ENCODE measurements at regions of chr1 and their contacts with region 1.

Region 1: DNA sequence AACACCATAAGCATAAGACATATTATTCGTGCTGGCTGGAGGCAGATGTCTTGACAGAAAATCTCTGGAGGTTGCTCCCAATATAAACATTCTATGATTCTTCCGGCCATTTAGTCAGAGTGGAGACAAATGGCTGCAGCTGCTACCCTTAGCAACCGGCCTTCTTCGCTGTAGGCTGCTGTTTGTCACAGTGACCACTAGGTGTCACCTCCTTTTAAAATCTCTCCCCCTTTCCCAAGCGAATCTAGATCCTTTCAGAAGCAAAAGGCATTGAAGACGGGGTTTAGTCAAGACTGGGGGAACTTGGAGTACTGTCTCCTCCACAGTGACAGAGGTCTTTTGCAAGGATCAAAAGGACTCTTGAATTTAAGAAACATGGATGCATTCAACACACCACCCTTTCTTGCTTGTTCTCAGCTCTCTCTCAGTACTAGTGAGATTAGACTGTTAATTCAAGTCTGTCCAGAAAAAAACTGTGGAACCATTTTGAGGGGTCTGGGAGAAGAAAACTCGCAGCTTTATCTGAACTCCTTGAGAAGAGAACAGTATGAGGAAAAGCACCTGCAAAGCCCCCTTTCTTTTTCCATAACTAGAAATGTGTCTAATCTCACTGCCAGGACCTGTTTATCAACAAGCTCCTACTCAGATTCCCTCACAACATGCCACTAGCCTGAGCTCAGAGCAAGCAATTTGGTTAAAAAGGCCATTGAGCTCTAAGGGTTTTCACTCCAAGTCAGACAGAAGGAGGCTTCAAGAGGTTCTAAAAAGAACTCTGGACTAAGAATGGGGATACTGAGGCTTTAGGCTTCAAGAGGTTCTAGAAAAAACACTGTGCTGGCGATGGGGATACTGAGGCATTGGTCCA is 408.3 kb upstream of the PLXNA2 start:
- DNase-seq: peak; percentile 13
- H3K4me3 Mint-ChIP-seq: no peak overlapping the region
- H3K27ac Mint-ChIP-seq: no peak overlapping the region
- H3K4me1 Mint-ChIP-seq: no peaks in the 10 kb centered on the region
- H3K27me3 Mint-ChIP-seq: no peaks in the 10 kb centered on the region

Region 2: DNA sequence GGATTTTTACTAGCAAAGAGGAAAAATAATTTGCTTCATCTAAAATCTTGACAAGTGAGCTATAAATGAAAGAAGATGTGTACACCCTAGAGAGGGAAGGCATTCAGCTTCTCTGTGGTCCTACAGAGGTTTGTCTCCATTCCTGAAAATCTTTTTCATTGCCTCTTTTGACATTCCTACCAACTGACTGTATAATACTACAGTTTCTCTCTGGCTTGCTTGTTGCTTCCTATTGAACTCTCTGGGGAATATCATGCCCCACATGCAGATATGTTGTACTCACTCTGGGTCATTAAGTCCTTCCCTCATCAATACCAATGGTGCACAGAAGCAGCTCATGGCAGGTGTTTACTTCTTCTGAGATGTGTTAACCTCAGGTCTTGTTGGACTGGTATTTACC is 37.2 kb before region 1 on chr1:
- intact Hi-C with region 1: no loop called
- DNase-seq: no peak
- H3K4me3 Mint-ChIP-seq: no peak overlapping the region
- H3K27ac Mint-ChIP-seq: no peak overlapping the region
- H3K4me1 Mint-ChIP-seq: no peaks in the 10 kb centered on the region
- H3K27me3 Mint-ChIP-seq: no peaks in the 10 kb centered on the region

Region 3: DNA sequence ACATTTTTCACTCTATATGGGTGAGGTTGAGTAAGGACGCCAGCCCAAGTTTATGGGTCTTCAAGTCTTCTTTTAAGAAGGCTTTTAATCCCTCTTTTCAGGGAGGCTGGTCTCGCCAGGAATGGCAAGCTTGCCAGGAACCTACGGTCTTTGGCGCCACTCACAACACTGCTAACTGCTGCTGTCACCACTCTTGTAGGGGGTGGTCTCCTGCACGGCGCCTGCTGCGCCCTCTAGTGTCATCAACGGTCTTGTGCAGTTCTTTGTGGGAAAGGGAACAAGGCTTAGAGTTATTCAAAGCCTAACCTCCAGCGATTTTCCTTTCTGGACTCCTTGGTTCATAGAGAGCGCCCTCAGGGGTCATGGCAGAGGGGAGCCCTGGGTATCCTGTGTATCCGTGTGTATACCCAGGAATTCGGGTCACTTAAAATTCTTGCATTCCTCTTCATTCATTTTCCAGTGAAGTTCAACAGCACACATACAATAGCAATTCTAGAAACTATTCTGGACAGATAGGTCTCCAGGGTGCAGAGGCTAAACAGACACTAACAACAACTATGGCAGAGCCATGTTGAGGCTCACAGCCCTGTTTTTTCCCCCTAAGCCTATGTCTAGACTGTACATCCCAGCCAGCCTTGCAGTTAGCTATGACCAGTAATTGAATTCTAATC is 538.2 kb after region 1 on chr1:
- intact Hi-C with region 1: loop called (anchors 10 kb)
- DNase-seq: no peak
- H3K4me3 Mint-ChIP-seq: no peak overlapping the region
- H3K27ac Mint-ChIP-seq: no peak overlapping the region
- H3K4me1 Mint-ChIP-seq: no peaks in the 10 kb centered on the region
- H3K27me3 Mint-ChIP-seq: no peaks in the 10 kb centered on the region

Region 4: GRCh38 chr1:209248649-209249279 is 596.2 kb after region 1 on chr1:
- intact Hi-C with region 1: loop called (anchors 2 kb)
- DNase-seq: peak; percentile 14
- H3K4me3 Mint-ChIP-seq: no peak overlapping the region
- H3K27ac Mint-ChIP-seq: no peak overlapping the region
- H3K4me1 Mint-ChIP-seq: no peaks in the 10 kb centered on the region
- H3K27me3 Mint-ChIP-seq: no peaks in the 10 kb centered on the region

Region 5: GRCh38 chr1:209565759-209566678 is 913.5 kb after region 1 on chr1:
- intact Hi-C with region 1: loop called (anchors 5 kb)
- DNase-seq: peak; percentile 57
- H3K4me3 Mint-ChIP-seq: no peak overlapping the region
- H3K27ac Mint-ChIP-seq: no peak overlapping the region
- H3K4me1 Mint-ChIP-seq: peaks cover 19% of the 10 kb centered on the region
- H3K27me3 Mint-ChIP-seq: peaks cover 17% of the 10 kb centered on the region

Measured in activated T-helper 2 cell treated with anti-CD3 and anti-CD28 coated beads, Interferon-gamma antibody, Interleukin-2, Interleukin-4, amounts not matched to agents 10 μg/mL and 5 μg/mL and 100 μg/mL, durations not matched to agents 14 hours and 24 hours and 36 hours (primary cell).